ENCODE measurements at regions of chr12 and their contacts with region 1.

Region 1: GRCh38 chr12:121678716-121679580 is 9.5 kb upstream of the MORN3 start:
- DNase-seq: no peak
- H3K4me3 ChIP-seq: no peak overlapping the region
- CTCF ChIP-seq: no peak
- POLR2A ChIP-seq: no peak

Region 2: GRCh38 chr12:121550974-121551634 is 127.8 kb before region 1 on chr12:
- intact Hi-C with region 1: loop called (anchors 5 kb)
- DNase-seq: no peak
- H3K4me3 ChIP-seq: no peak overlapping the region
- CTCF ChIP-seq: no peak
- POLR2A ChIP-seq: no peak

Region 3: GRCh38 chr12:121858662-121859572 is 180.0 kb after region 1 on chr12 and contains the start of gene HPD:
- intact Hi-C with region 1: no loop called
- DNase-seq: peak in 1 of 2 donors; percentile 35
- H3K4me3 ChIP-seq: no peak within 1 kb of the TSS
- CTCF ChIP-seq: no peak
- POLR2A ChIP-seq: no peak
- total RNA-seq, gene HPD: not detected

Measured in lower leg skin (tissue), 4 donors.